A673 (cell line): ENCODE measurements at regions of chr3 and their contacts with region 1.

Region 1: DNA sequence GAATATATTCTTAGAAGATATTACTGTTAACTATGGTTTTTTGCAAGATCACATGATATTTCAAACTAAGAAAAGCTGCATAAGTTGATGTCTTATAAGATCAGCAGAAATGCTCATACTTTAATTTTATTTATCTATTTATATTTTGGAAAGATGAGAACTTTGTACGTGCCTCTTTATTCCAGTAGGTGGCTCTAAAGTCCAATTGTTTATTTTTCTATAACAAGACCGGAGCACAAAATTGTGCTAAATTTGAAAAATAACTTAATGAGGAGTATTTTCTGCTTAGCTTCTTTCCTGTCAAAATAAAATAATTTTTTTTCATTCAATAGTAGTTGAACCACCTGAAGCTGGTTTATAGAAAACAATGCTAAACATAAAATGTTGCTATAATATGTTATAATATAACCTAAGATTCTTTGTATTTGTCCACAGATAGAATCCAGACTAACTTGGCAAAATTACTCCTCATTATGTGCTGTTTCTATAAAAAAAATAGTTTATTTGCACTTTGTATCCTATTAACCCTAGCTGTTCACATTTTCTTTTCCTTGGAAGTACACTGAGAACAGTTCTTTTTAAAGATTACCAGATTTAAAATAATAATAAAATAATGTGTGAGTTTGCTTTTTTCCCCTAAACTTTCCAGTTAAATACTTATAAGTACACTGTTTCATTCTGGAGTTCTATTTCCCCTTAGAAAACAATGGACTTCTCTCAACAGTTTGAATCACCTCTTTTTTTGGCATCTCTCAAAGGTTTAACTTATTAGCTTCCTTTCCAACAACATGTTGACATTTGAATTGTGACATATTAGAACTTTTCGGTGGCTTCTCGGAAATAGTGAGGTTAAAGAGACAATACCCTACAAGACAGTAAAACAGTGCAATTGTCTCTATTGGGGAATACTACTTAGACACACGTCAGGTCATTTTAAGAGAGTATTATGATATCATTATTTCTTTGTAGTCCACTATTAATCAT is 530.0 kb downstream of the MECOM start:
- DNase-seq: peak; percentile 31
- H3K4me3 ChIP-seq: no peak overlapping the region
- H3K27ac ChIP-seq: no peak overlapping the region
- H3K4me1 ChIP-seq: no peaks in the 10 kb centered on the region
- H3K27me3 ChIP-seq: peaks cover 79% of the 10 kb centered on the region
- CTCF ChIP-seq: peak; percentile 58; the same call in 1 of the 2 replicates

Region 2: DNA sequence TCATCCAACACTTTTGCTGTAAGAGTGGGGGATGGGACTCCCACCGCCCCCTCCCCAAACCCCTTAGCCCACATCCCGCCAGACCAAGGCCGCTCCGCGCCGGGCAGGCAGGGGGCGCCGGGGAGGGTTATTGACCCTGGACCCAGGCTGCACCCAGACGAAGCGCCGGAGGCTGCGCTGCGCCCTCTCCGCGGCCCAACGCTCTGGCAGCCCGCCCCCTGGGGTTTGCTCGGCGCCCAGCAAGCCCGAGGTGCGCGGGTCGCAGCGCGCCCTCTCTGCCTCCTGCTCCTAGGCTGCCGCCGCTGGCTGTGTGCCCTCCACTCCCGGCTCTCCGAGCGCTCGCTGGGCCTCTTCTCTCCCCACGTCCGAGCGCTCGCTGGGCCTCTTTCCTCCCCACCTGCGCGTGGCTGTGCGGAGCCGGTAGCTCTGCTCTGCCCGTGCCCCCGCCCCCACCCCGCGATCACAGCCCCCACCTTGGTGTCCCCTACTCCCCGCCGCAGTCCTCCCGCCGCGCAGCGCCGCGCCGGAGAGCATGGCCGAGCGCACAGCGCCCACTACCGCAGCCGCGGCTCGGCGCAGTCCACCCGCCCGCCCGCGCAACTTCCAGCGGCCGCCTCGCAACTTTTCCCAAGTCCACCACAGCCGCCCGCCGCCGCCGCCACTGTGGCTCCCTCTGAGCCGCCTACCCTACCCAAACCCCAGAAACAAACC is 528.8 kb after region 1 on chr3:
- CTCF ChIA-PET with region 1: no interaction called
- POLR2A ChIA-PET with region 1: no interaction called
- intact Hi-C with region 1: loop called (anchors 5 kb)
- DNase-seq: peak; percentile 62
- H3K4me3 ChIP-seq: peak overlapping the region; percentile 47
- H3K27ac ChIP-seq: no peak overlapping the region
- H3K4me1 ChIP-seq: peaks cover 8% of the 10 kb centered on the region
- H3K27me3 ChIP-seq: peaks cover 94% of the 10 kb centered on the region
- CTCF ChIP-seq: peak; percentile 49

Region 3: GRCh38 chr3:170180908-170181879 is 1047.7 kb after region 1 on chr3 and contains the start of gene PHC3:
- CTCF ChIA-PET with region 1: no interaction called
- POLR2A ChIA-PET with region 1: no interaction called
- intact Hi-C with region 1: no loop called
- DNase-seq: peak; percentile 96
- H3K4me3 ChIP-seq: peak within 1 kb of the TSS; percentile 82
- H3K27ac ChIP-seq: peak within 1 kb of the TSS; percentile 93
- H3K4me1 ChIP-seq: peaks cover 6% of the 10 kb centered on the region
- H3K27me3 ChIP-seq: no peaks in the 10 kb centered on the region
- CTCF ChIP-seq: no peak
- total RNA-seq, gene PHC3: 49.2 and 55.4 TPM in 2 replicates